GM12878 (cell line): ENCODE measurements at regions of chr4 and their contacts with region 1.

Region 1: GRCh38 chr4:23135792-23136645 is 443.3 kb downstream of the GBA3 start:
- DNase-seq: no peak
- ATAC-seq: peak; percentile 79
- H3K4me3 ChIP-seq: no peak overlapping the region
- H3K27ac ChIP-seq: no peak overlapping the region
- H3K4me1 ChIP-seq: no peaks in the 10 kb centered on the region
- H3K27me3 ChIP-seq: no peaks in the 10 kb centered on the region; a peak in 1 of 4 replicates
- CTCF ChIP-seq: peak; percentile 64 to 80 (median 65)
- EP300 ChIP-seq: no peak
- POLR2A ChIP-seq: no peak
- RAD21 ChIP-seq: peak; percentile 68

Region 2: GRCh38 chr4:22719218-22719617 is 416.8 kb before region 1 on chr4:
- CTCF ChIA-PET with region 1: no interaction called
- POLR2A ChIA-PET with region 1: no interaction called
- RAD21 ChIA-PET with region 1: no interaction called
- SMC1A ChIA-PET with region 1: no interaction called
- in situ Hi-C with region 1: no loop called
- intact Hi-C with region 1: no loop called
- DNase-seq: no peak
- ATAC-seq: no peak
- H3K4me3 ChIP-seq: no peak overlapping the region
- H3K27ac ChIP-seq: no peak overlapping the region
- H3K4me1 ChIP-seq: no peaks in the 10 kb centered on the region
- H3K27me3 ChIP-seq: no peaks in the 10 kb centered on the region
- CTCF ChIP-seq: no peak
- EP300 ChIP-seq: no peak
- POLR2A ChIP-seq: no peak
- RAD21 ChIP-seq: no peak

Region 3: GRCh38 chr4:22962295-22962694 is 173.7 kb before region 1 on chr4:
- CTCF ChIA-PET with region 1: interaction called, 6 read pairs
- POLR2A ChIA-PET with region 1: no interaction called
- RAD21 ChIA-PET with region 1: interaction called, 6 read pairs
- SMC1A ChIA-PET with region 1: interaction called, 3 read pairs
- in situ Hi-C with region 1: no loop called
- intact Hi-C with region 1: loop called (anchors 10 kb)
- DNase-seq: no peak
- ATAC-seq: peak; percentile 60
- H3K4me3 ChIP-seq: no peak overlapping the region
- H3K27ac ChIP-seq: no peak overlapping the region
- H3K4me1 ChIP-seq: no peaks in the 10 kb centered on the region
- H3K27me3 ChIP-seq: no peaks in the 10 kb centered on the region
- CTCF ChIP-seq: peak in 1 of 3 experiments; percentile 11; a peak in 2 of 6 replicates
- EP300 ChIP-seq: no peak
- POLR2A ChIP-seq: no peak
- RAD21 ChIP-seq: peak; percentile 14; the same call in 1 of the 2 replicates

Region 4: GRCh38 chr4:23114538-23114937 is 21.5 kb before region 1 on chr4:
- CTCF ChIA-PET with region 1: interaction called, 16 read pairs
- POLR2A ChIA-PET with region 1: no interaction called
- RAD21 ChIA-PET with region 1: interaction called, 9 read pairs
- SMC1A ChIA-PET with region 1: interaction called, 38 read pairs
- in situ Hi-C with region 1: no loop called
- intact Hi-C with region 1: no loop called
- DNase-seq: no peak
- ATAC-seq: peak; percentile 78
- H3K4me3 ChIP-seq: no peak overlapping the region
- H3K27ac ChIP-seq: no peak overlapping the region
- H3K4me1 ChIP-seq: no peaks in the 10 kb centered on the region
- H3K27me3 ChIP-seq: no peaks in the 10 kb centered on the region
- CTCF ChIP-seq: no peak
- EP300 ChIP-seq: no peak
- POLR2A ChIP-seq: no peak
- RAD21 ChIP-seq: no peak

Region 5: GRCh38 chr4:23163647-23164436 is 27.8 kb after region 1 on chr4:
- CTCF ChIA-PET with region 1: interaction called, 18 read pairs
- POLR2A ChIA-PET with region 1: no interaction called
- RAD21 ChIA-PET with region 1: interaction called, 3 read pairs
- SMC1A ChIA-PET with region 1: interaction called, 3 read pairs
- in situ Hi-C with region 1: no loop called
- intact Hi-C with region 1: no loop called
- DNase-seq: no peak
- ATAC-seq: no peak
- H3K4me3 ChIP-seq: no peak overlapping the region
- H3K27ac ChIP-seq: no peak overlapping the region
- H3K4me1 ChIP-seq: no peaks in the 10 kb centered on the region
- H3K27me3 ChIP-seq: no peaks in the 10 kb centered on the region
- CTCF ChIP-seq: no peak
- EP300 ChIP-seq: no peak
- POLR2A ChIP-seq: no peak
- RAD21 ChIP-seq: no peak

Region 6: DNA sequence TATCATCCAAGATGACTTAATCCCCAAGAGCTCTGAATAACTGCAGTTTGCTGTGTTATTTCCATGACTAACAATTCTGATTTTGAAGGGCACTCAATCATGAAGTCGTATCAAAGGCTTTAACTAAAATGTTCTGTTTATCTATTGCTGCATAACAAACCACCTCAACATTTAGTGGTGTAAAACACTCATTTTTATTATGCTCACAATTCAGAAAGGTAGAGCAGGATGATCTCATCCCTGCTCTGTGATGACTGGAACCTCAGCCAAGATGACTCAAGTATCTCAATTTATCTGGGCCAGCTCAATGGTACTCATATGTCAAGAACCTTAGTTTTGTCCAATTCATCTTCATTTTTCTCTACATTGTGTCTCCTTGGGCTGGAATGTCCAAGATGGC is 302.7 kb after region 1 on chr4:
- CTCF ChIA-PET with region 1: no interaction called
- POLR2A ChIA-PET with region 1: interaction called, 10 read pairs
- RAD21 ChIA-PET with region 1: no interaction called
- SMC1A ChIA-PET with region 1: no interaction called
- in situ Hi-C with region 1: no loop called
- intact Hi-C with region 1: no loop called
- DNase-seq: no peak
- ATAC-seq: no peak
- H3K4me3 ChIP-seq: no peak overlapping the region
- H3K27ac ChIP-seq: no peak overlapping the region
- H3K4me1 ChIP-seq: no peaks in the 10 kb centered on the region
- H3K27me3 ChIP-seq: no peaks in the 10 kb centered on the region
- CTCF ChIP-seq: no peak
- EP300 ChIP-seq: no peak
- POLR2A ChIP-seq: no peak
- RAD21 ChIP-seq: no peak

Region 7: DNA sequence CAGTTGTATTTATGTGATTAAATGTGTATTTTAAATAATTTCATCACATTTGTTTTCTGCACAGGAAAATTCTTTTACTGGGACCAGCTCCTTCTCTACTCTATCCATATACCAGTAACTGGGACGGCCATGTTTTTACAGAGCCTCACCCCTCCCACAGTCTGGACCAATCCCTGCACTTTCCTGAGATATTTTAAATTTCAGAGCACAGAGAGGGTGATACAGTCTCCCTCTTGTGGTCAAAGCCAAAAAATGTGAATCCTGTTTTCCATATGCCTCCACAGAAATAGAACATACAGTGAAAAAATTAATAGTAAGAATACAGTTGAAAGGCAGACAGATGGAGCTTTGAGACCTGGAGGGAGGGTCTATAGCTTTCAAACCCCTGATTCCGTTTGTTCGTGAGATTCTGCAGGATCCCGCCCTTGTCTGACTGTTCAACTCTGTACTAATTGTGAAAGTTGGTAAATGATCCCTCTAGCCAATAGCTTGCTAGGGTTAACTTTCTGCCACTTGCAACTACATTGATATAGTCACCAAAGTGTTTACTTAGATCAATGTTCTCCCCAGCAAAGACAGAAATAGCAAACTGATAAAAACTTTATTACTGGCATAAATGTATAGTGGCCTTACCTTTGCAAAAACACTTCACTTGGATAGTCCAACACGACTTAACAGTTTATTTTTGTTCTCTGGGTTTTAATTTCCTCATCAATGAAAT is 581.7 kb after region 1 on chr4:
- CTCF ChIA-PET with region 1: no interaction called
- POLR2A ChIA-PET with region 1: no interaction called
- RAD21 ChIA-PET with region 1: interaction called, 3 read pairs
- SMC1A ChIA-PET with region 1: interaction called, 4 read pairs
- in situ Hi-C with region 1: no loop called
- intact Hi-C with region 1: loop called (anchors 10 kb)
- DNase-seq: no peak
- ATAC-seq: peak; percentile 73
- H3K4me3 ChIP-seq: no peak overlapping the region
- H3K27ac ChIP-seq: no peak overlapping the region
- H3K4me1 ChIP-seq: no peaks in the 10 kb centered on the region
- H3K27me3 ChIP-seq: no peaks in the 10 kb centered on the region
- CTCF ChIP-seq: peak in 1 of 3 experiments; percentile 20; a peak in 1 of 6 replicates
- EP300 ChIP-seq: no peak
- POLR2A ChIP-seq: no peak
- RAD21 ChIP-seq: 0 out of 2 replicates have a peak, but pooled peaks have one; percentile 8